ENCODE measurements at regions of chr1 and their contacts with region 1.

Region 1: GRCh38 chr1:154558575-154559465 is at the start of gene UBE2Q1:
- DNase-seq: peak; percentile 98
- ATAC-seq: peak; percentile 88
- H3K4me3 Mint-ChIP-seq: peak within 1 kb of the TSS; percentile 95
- H3K27ac Mint-ChIP-seq: peak within 1 kb of the TSS; percentile 91
- H3K4me1 Mint-ChIP-seq: peaks cover 35% of the 10 kb centered on the region
- H3K27me3 Mint-ChIP-seq: no peaks in the 10 kb centered on the region
- CTCF ChIP-seq: no peak
- total RNA-seq, gene UBE2Q1: 96.5 and 104 TPM in 2 replicates

Region 2: DNA sequence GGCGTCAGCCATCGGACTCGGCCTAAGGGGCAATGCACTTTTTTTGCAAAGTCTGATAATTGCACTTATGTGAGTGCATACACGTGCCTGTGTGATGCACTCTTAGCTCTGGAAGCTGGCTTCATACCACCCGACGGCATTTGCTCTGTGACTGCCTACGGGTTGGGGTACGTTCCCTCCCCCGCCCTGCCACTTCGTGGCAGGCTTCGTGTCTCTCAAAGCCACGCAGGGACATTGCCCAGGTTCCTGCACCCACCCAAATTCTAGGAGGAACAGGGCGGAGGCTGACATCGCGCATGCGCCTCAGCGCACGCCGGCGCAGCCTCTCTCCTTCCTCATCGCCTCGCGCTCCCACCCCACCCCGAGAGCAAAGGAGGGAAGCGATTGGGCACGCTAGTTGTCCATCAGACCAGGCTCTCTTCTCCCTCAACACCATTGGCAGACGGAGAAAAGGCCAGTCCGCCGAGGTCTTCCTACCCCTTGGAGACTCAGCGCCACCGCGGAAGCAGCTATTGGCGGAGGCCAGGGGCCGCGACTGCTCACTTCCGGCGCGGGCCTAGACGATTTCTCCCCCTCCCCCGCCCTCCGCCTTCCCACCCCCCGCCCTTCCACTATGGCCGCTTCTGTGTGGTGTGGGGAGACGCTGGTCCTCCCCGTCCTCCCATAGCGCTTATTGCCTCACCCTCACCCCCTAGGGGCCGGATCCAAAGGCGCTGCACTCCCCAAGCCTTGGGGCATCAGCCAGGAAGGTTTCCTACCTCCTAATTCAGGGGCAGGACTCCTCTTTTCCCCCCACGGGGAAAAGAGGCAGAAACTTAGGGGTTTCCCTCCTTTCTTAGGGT is 831.1 kb before region 1 on chr1 and contains the start of gene INTS3:
- CTCF ChIA-PET with region 1: no interaction called
- POLR2A ChIA-PET with region 1: no interaction called
- intact Hi-C with region 1: loop called (anchors 5 kb)
- DNase-seq: peak; percentile 90
- ATAC-seq: peak; percentile 96
- H3K4me3 Mint-ChIP-seq: peak within 1 kb of the TSS; percentile 97
- H3K27ac Mint-ChIP-seq: peak within 1 kb of the TSS; percentile 96
- H3K4me1 Mint-ChIP-seq: peaks cover 39% of the 10 kb centered on the region
- H3K27me3 Mint-ChIP-seq: no peaks in the 10 kb centered on the region
- CTCF ChIP-seq: no peak
- total RNA-seq, gene INTS3: 81.1 and 88.6 TPM in 2 replicates

Region 3: DNA sequence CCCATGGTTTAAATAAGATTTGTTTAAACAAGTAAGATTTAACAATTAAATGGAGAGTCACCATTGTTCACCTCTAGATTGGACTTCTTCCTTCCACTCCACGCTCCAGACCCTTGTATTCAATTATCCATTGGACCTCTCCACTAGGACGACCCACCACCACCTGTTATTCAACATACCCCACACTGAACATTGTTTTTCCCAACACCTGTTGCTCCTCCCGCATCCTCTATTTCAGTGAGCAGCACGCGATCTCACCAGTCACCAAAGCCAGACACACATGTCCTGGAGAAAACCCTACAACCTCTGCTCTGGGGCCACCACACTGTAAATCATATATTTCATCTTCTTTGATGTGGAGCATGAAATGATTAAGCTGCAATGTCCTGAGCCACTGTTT is 204.9 kb before region 1 on chr1:
- CTCF ChIA-PET with region 1: no interaction called
- POLR2A ChIA-PET with region 1: no interaction called
- intact Hi-C with region 1: no loop called
- DNase-seq: no peak
- ATAC-seq: no peak
- H3K4me3 Mint-ChIP-seq: peak overlapping the region; percentile 80
- H3K27ac Mint-ChIP-seq: no peak overlapping the region
- H3K4me1 Mint-ChIP-seq: peaks cover 18% of the 10 kb centered on the region
- H3K27me3 Mint-ChIP-seq: peaks cover 21% of the 10 kb centered on the region
- CTCF ChIP-seq: no peak

Region 4: DNA sequence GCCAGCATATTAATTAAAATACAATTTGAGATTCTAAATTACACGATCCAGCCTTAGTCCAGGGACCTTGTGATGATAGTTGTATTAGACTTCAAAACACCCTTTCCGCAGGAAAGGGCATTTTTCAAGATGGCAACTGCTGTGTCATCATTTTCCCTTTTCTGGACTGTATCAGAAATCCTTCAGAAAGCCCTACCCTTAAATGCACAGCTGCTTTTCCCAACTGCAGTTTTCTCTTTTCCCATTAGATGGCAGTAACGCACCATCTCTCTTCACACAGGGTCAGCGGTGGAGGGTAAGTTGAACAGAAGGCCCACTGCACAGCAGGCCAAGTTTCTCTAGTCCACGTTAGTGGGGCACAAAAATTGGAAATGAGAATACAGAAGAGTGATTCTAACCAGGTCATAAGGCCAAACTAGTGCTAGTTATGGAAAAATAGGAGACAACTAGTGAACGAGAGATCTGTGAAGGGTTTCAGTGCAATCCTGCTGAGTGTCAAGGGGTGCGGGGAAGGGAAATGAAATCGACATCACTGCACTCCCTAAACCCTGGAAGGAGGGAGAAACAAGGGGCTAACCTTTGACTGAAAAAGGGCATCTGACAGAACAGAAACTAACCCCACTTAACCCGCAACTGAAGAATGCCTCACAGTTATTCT is 78.9 kb before region 1 on chr1:
- CTCF ChIA-PET with region 1: interaction called, 19 read pairs
- POLR2A ChIA-PET with region 1: no interaction called
- intact Hi-C with region 1: no loop called
- DNase-seq: no peak
- ATAC-seq: peak; percentile 95
- H3K4me3 Mint-ChIP-seq: no peak overlapping the region
- H3K27ac Mint-ChIP-seq: no peak overlapping the region
- H3K4me1 Mint-ChIP-seq: peaks cover 6% of the 10 kb centered on the region
- H3K27me3 Mint-ChIP-seq: no peaks in the 10 kb centered on the region
- CTCF ChIP-seq: peak; percentile 86

Region 5: DNA sequence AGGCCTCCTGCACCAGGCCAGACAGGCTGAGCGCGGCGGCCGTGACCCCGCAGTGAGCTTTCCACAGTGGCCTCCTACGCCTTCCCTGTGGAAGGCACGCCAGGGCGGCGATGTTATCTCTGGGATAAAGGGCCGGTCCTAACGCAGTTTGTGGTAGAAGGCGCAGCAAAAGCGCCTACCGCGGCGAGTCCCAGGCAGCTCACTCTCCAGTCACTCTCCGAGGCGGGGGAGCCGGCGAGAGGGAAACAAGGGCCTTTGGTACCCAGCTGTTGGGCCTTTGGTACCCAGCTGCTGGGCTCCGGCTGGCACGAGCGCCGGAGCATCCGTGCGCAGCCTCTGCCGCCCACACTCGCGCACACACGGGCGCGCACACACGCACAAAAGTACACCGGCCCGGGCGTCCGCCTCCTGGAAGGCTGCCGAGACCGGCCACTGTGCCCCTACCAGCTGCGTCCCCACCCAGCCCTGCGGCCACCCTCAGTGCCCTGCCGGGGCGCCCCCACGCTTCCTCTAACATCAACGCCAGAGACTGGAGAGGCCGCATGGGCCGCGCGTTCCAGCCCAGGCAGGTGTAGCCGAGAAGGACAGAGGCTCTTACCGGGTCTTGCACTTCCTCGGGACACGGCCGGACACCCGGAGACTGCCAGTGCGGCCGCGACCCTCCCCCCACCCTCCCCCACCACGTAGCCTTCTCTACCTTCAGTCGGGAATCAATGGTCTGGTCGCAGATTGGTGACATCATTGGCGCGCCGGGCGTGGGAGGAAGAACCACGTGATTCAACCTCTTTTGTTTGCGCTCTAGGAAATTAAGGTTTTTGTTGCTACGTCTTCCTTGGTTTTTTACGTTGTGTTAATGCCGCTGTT is 68.7 kb after region 1 on chr1:
- CTCF ChIA-PET with region 1: interaction called, 3 read pairs
- POLR2A ChIA-PET with region 1: interaction called, 3 read pairs
- intact Hi-C with region 1: loop called (anchors 1 kb)
- DNase-seq: peak; percentile 87
- ATAC-seq: peak; percentile 77
- H3K4me3 Mint-ChIP-seq: peak overlapping the region; percentile 93
- H3K27ac Mint-ChIP-seq: peak overlapping the region; percentile 99
- H3K4me1 Mint-ChIP-seq: peaks cover 32% of the 10 kb centered on the region
- H3K27me3 Mint-ChIP-seq: peaks cover 3% of the 10 kb centered on the region
- CTCF ChIP-seq: no peak

Region 6: GRCh38 chr1:154878371-154879022 is 319.7 kb after region 1 on chr1:
- CTCF ChIA-PET with region 1: interaction called, 36 read pairs
- POLR2A ChIA-PET with region 1: interaction called, 10 read pairs
- intact Hi-C with region 1: loop called (anchors 1 kb)
- DNase-seq: peak; percentile 64
- ATAC-seq: peak; percentile 99
- H3K4me3 Mint-ChIP-seq: no peak overlapping the region
- H3K27ac Mint-ChIP-seq: no peak overlapping the region
- H3K4me1 Mint-ChIP-seq: no peaks in the 10 kb centered on the region
- H3K27me3 Mint-ChIP-seq: no peaks in the 10 kb centered on the region
- CTCF ChIP-seq: no peak

Region 7: DNA sequence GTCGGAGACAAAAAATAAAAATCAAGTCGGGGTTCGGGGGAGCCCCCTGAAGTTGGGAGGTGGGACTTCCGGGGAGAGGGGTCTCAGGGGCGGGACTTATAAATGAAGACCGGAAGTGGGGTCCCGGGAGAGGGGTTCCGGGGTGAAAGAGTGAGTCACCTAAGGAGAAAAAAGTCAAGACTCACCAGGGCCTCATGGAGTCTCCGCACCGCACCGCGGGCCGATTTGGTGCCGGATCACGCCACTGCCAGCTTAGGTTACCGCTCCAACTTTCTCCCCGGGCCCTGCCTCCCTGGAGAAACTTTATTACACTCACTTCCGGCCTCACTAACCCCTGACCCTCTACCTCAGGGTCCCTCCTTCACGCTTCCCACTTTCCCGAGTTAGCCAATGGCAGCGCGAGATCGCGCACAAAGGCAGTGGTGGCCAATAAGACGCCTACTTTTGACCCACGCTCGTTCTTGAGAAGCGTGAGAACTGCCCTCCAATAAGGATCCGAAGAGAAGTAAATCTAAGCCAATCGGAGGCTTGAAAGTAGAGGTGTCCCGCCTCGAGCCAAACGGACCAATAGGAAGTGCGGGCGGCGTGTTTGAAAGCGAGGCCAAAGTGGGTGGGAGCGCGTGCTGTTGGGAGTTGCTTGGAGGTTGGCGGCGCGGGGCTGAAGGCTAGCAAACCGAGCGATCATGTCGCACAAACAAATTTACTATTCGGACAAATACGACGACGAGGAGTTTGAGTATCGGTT is 415.4 kb after region 1 on chr1 and contains the start of gene CKS1B:
- CTCF ChIA-PET with region 1: no interaction called
- POLR2A ChIA-PET with region 1: no interaction called
- intact Hi-C with region 1: loop called (anchors 1 kb)
- DNase-seq: peak; percentile 87
- ATAC-seq: peak; percentile 83
- H3K4me3 Mint-ChIP-seq: no peak within 1 kb of the TSS
- H3K27ac Mint-ChIP-seq: no peak within 1 kb of the TSS
- H3K4me1 Mint-ChIP-seq: peaks cover 36% of the 10 kb centered on the region
- H3K27me3 Mint-ChIP-seq: no peaks in the 10 kb centered on the region
- CTCF ChIP-seq: no peak
- total RNA-seq, gene CKS1B: 25.3 and 26.6 TPM in 2 replicates

Region 8: DNA sequence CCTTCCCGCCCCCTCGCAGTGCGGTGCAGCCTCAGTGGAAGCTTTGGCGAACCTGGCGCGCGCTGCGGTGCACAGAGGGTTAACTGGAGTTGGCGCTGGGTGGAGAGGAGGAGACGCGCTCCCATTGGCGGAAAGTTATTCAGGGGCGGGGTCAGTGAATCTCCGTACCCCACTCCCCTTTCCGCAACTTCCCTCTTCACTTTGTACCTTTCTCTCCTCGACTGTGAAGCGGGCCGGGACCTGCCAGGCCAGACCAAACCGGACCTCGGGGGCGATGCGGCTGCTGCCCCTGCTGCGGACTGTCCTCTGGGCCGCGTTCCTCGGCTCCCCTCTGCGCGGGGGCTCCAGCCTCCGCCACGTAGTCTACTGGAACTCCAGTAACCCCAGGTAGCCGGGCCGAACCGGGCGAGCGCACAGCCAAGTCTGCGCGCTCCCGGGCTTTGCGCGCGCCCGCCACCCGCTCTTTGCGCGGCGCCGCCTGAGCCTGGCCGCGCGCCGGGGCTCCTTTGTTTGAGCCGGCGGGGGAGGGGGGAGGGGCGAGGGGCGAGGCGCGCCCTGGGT is 504.8 kb after region 1 on chr1 and contains the start of gene EFNA4:
- CTCF ChIA-PET with region 1: interaction called, 17 read pairs
- POLR2A ChIA-PET with region 1: interaction called, 4 read pairs
- intact Hi-C with region 1: loop called (anchors 1 kb)
- DNase-seq: peak; percentile 73
- ATAC-seq: peak; percentile 83
- H3K4me3 Mint-ChIP-seq: peak within 1 kb of the TSS; percentile 83
- H3K27ac Mint-ChIP-seq: peak within 1 kb of the TSS; percentile 67
- H3K4me1 Mint-ChIP-seq: peaks cover 50% of the 10 kb centered on the region
- H3K27me3 Mint-ChIP-seq: no peaks in the 10 kb centered on the region
- CTCF ChIP-seq: no peak
- total RNA-seq, gene EFNA4: 7.8 and 9.5 TPM in 2 replicates